ENCODE measurements at regions of chr14 and their contacts with region 1.

Region 1: DNA sequence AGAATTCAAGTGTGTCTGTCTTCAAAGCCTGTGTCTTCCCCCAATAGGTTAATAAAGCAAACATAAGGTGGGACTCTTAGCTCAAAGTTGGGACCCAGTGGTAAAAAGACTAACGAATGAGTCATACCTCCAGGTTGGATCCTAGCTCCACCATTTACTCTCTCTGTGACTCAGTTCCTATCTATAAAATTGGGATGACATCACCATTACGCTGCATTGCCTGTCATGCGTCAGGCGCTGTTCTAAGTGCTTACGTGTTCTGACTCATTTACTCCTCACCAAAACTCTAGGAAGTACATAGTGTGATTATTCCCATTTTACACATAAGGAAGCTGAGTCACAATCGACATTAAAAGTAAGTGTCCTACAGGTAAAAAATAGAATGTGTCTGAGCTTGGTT is 915.8 kb downstream of the VRK1 start:
- DNase-seq: peak; percentile 75
- H3K4me3 Mint-ChIP-seq: no peak overlapping the region
- H3K27ac Mint-ChIP-seq: peak overlapping the region; percentile 86
- H3K4me1 Mint-ChIP-seq: peaks cover 56% of the 10 kb centered on the region
- H3K27me3 Mint-ChIP-seq: no peaks in the 10 kb centered on the region

Region 2: DNA sequence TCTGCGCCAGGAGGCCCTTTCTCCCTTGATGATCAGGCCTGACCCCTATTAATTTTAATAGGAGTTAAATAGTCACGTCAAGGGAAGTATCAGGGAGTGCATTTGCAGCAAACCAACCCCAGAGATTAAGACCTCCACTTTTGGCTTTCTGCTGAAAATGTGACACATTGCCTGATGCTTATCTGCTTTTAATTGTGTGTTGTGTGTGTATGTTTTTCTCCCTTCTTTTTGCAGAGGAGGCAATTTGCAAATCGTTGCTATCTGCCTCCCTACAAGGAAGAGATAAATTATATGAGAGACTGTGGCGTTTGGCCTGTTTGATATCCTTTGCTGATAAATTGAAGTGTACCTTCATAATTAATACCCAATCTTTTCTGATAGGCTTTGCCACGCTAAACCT is 93.0 kb before region 1 on chr14:
- CTCF ChIA-PET with region 1: no interaction called
- intact Hi-C with region 1: loop called (anchors 5 kb)
- DNase-seq: no peak
- H3K4me3 Mint-ChIP-seq: peak overlapping the region; percentile 72
- H3K27ac Mint-ChIP-seq: peak overlapping the region; percentile 76
- H3K4me1 Mint-ChIP-seq: peaks cover 46% of the 10 kb centered on the region
- H3K27me3 Mint-ChIP-seq: no peaks in the 10 kb centered on the region